GM10248 (cell line): ENCODE measurements at regions of chr3 and their contacts with region 1.

Region 1: DNA sequence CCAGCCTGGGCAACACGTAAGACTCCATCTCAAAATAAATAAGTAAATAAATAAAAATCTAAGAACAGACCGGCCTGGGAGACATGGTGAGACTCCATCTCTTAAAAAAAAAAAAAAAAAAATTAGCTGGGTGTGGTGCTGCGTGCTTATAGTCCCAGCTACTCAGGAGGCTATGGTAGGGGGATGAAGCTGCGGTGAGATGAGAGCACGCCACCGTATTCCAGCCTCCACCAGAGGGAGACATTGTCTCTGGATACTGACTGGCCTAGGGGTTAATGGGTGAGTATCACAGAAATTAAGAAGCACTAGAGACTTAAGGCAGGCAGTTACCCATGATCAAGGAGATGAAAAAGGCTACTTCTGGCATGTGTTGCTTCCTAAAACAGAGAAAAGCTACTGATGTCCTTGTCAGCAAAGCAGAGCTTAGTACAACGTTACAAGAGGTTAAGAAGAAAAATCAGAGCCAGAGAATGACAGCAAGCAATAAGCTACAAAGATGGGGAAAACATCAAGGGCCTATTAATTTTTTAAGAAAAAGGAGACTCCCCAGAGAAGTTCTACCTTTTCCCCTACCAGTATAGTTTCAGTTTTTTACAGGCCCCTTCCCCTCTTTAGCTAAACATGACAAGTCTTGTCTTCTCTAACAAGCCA is 8.6 kb downstream of the TFRC start:
- DNase-seq: peak; percentile 65
- CTCF ChIP-seq: peak; percentile 66

Region 2: DNA sequence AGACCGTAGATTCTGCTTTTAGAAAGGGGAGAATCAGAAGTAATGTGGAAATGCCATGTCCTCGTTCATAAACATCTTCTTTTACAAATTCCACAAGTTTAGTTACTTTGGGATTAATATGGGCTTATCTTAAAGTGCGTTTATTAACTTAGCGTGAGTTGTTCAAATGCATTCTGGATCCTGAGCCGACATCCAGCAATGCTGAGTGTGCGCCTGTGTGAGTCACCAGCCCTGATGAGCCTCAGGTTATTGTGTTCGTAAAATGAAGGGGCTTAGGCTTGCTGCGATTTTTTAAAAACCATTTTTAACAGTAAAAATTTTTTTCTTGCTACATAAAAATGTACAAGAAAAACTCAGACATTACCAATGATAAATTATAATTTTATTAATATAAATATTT is 49.4 kb before region 1 on chr3:
- CTCF ChIA-PET with region 1: interaction called, 10 read pairs
- POLR2A ChIA-PET with region 1: interaction called, 4 read pairs
- DNase-seq: no peak
- CTCF ChIP-seq: no peak

Region 3: DNA sequence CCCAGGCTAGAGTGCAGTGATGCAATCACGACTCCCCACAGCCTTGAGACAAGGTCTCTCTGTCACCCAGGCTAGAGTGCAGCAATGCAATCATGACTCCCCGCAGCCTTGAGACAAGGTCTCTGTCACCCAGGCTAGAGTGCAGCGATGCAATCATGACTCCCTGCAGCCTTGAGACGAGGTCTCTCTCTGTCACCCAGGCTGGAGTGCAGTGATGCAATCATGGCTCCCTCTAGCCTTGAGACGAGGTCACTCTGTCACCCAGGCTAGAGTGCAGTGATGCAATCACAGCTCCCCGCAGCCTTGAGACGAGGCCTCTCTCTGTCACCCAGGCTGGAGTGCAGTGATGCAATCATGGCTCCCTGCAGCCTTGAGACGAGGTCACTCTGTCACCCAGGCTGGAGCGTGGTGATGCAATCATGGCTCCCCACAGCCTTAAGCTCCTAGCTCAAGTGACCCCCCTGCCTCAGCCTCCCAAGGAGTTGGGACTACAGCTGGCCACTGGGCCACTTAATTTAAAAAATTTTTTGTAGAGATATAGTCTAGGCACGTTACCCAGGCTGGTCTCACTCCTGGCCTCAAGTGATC is 17.5 kb before region 1 on chr3:
- CTCF ChIA-PET with region 1: interaction called, 12 read pairs
- POLR2A ChIA-PET with region 1: no interaction called
- DNase-seq: no peak
- CTCF ChIP-seq: no peak

Region 4: DNA sequence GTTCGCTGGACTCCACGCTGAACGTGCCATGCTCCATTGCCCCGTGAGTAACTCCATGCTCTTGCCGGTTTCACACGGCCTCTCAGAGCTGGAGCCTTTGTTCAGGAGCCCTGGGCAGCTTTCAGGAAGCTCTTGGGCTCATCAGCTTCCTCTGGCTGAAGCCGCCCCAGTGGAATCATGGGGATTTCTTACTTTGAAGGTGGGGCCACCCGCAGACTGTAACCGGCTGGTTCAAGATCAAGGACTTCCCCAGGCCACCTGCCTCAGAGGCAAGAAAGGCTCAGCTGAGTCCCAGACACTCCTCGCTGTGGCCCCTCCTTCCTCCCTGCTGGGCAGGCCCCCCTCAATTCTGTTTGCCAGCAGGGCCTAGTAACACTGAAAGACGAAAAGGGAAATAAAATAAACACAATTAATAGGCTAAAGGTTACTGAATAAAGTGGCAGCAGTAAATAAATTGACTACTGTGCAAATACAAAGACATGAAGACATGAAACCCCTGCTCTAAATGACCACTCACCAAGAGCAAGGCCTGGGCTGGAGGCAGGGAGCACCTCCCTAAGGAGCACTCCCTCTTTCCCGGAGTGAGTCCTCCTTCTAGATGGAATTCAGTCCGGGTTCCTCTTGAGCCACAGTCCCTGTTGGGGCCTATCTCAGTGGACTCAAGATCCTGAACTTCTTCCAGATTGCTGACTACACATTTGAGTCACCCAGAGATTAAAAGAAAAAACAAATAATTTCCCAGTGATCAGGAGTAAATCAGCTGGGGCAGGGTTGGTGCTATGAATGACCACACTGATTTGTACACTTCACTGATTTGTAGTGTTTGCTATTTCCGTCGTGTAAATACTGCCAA is 86.9 kb after region 1 on chr3:
- CTCF ChIA-PET with region 1: interaction called, 11 read pairs
- POLR2A ChIA-PET with region 1: no interaction called
- DNase-seq: peak; percentile 88
- CTCF ChIP-seq: no peak

Region 5: GRCh38 chr3:196186651-196187573 is 113.6 kb after region 1 on chr3:
- CTCF ChIA-PET with region 1: interaction called, 195 read pairs
- POLR2A ChIA-PET with region 1: no interaction called
- DNase-seq: peak; percentile 60
- CTCF ChIP-seq: no peak

Region 6: DNA sequence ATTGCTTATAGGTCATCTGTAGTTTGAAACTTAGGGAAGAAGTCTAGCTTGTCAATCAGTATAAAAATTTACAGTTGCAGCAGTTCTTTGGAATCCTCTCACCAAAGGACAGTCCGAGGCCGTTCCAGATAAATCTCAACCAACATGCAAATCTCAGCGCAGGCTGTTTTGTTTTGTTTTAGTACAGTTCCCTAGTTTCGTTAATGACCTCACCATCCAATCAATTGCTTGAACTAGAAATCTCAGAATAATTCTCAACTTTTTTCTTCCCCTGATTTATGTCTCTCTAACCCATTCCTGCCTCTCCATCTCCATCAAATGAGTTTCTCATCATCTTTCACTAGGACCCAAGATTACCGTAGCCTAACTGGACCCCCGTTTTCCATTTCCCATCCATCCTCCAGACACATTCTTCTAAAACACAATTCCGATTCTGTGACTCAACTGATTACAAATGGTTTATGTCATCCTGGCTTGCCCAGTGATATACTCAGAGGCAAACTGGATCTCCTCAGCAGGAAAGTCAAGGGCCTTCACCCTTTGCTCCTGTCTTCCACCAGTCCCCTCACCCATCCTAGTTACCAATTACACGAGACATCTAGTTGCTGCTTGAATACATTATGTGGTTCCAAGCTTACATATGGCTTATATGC is 440.5 kb after region 1 on chr3:
- CTCF ChIA-PET with region 1: no interaction called
- POLR2A ChIA-PET with region 1: no interaction called
- DNase-seq: no peak
- CTCF ChIP-seq: no peak